ENCODE measurements at regions of chr3 and their contacts with region 1.

Region 1: DNA sequence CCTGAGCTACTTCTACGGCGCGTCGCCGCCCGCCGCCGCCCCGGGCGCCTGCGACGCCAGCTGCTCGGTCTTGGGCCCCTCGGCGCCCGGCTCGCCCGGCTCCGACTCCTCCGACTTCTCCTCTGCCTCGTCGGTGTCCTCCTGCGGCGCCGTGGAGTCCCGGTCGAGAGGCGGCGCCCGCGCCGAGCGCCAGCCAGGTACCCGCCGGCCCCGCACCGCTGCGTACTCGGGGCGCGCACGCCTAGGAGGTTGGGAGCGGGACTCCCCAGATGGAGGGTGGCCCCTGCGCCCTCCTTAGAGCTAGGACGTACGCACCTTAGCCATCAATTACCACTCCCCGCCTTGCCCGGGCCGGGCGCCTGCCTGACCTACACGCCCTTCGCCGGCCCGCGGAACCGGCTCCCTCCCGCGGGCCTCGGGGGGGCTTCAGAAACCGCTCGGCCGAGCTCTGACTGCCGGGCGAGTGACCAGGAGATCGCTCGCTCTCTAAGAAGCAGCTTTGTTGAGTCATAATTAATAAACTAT is 469 bp downstream of the NFKBIZ start:
- DNase-seq: peak; percentile 46 to 72
- H3K4me3 ChIP-seq: peak overlapping the region; percentile 95 to 99
- H3K27ac ChIP-seq: peak overlapping the region; percentile 100
- H3K4me1 ChIP-seq: peaks cover 0 to 43% (median 29%) of the 10 kb centered on the region in 4 donors
- H3K27me3 ChIP-seq: no peaks in the 10 kb centered on the region
- CTCF ChIP-seq: no peak

Region 2: GRCh38 chr3:101453961-101454360 is 395.8 kb before region 1 on chr3:
- intact Hi-C with region 1: no loop called
- DNase-seq: no peak
- H3K4me3 ChIP-seq: no peak overlapping the region
- H3K27ac ChIP-seq: no peak overlapping the region
- H3K4me1 ChIP-seq: peaks cover 0 to 6% (median 0%) of the 10 kb centered on the region in 4 donors
- H3K27me3 ChIP-seq: no peaks in the 10 kb centered on the region
- CTCF ChIP-seq: no peak

Region 3: DNA sequence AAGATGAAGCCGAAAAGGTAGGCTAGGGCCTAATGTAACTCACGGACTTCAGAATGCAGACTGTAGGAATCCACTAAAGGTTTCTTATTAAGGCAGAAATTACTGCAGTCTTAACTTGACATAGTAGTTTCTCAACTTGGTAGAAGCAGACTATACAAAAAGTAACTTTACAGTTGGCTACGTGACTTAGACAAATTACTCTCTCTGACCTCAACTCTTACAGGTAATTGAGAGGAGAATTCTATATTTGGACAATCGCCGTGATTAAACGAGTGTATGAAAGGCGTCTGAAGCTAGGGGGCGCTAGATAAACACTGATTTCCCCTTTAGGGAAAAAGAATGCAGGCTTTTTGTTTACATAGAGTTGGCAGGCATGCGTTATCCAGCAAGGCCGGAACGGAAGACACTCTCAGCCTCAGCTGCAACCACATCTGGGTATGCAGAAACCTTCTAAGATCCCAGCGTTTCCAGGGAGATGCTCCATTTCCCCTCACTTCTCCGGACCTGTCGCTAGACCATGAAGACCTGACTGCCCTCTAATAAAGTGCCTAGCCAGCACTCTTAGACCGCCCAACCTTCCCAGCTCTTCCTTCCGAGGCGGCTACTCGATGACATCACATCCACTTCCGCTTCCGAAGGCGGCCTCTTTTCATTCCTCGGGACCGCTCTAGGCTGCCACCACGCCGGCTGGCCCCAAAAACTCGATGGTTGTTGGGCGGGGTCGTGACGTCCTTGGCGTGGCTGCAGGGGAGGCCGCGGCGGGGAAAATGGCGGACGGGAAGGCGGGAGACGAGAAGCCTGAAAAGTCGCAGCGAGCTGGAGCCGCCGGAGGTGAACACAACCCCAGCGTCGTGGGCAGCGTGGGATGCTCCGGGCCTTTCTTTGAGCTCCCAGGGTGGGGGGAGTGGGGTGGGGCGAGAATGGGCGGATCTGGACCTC is 276.1 kb before region 1 on chr3 and contains the start of gene PCNP:
- intact Hi-C with region 1: no loop called
- DNase-seq: peak; percentile 99
- H3K4me3 ChIP-seq: peak within 1 kb of the TSS; percentile 75 to 87
- H3K27ac ChIP-seq: peak within 1 kb of the TSS; percentile 95 to 97
- H3K4me1 ChIP-seq: peaks cover 0 to 43% (median 21%) of the 10 kb centered on the region in 4 donors
- H3K27me3 ChIP-seq: no peaks in the 10 kb centered on the region
- CTCF ChIP-seq: peak; percentile 86 to 92

Region 4: GRCh38 chr3:101819758-101820157 is 30.0 kb before region 1 on chr3:
- intact Hi-C with region 1: loop called (anchors 5 kb)
- DNase-seq: no peak
- H3K4me3 ChIP-seq: no peak overlapping the region
- H3K27ac ChIP-seq: no peak overlapping the region
- H3K4me1 ChIP-seq: peaks cover 0 to 13% (median 0%) of the 10 kb centered on the region in 4 donors
- H3K27me3 ChIP-seq: no peaks in the 10 kb centered on the region
- CTCF ChIP-seq: no peak

Measured in tibial artery (tissue), 4 donors.